Head of caudate nucleus (tissue), 42 donors: ENCODE measurements at regions of chr3 and their contacts with region 1.

Region 1: DNA sequence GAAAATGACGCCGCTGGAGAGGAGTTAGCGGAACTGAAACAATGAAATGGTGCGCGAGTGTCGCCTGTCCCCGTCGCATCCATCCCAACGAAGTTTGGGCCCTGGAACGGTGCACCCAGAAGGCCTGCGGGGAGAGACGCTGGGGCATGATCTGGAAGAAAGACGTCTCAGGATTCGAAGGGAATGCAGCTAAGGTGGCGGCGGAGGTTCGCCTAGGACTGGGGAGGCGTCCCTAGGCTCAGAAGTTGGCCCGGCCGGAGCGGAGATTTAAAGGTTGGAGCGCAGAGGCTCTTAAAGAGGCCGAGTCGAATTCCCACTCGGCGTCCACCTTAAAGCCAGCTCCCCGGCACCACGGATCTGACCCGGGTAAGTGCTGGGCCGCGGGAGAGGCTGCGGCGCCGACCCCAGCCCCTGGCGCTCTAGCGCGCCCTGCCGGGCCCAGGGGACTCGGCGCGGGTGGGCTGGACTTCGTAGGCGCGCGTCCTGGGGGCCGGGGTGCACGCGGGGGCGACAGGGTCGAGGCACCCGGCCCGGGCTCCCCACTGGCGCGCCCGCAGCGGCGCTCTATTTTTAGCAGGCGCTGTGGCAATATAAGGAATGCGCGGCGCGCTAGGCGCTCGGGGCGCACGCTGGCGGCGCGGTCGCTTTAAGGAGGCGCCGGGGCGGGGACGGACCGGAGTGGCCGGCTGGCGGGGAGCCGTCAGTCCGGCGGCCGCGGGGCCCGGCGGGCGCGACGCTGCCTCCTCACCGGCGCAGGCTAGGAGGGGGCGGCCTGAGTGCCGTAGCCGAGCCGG is at the start of gene MRAS:
- DNase-seq: peak in 41 of 42 donors; percentile 54 to 87 (median 76)

Region 2: GRCh38 chr3:138082085-138082991 is 265.8 kb before region 1 on chr3:
- intact Hi-C with region 1: no loop called
- DNase-seq: no peak

Region 3: GRCh38 chr3:138408751-138409161 is 60.6 kb after region 1 on chr3:
- intact Hi-C with region 1: loop called (anchors 10 kb)
- DNase-seq: peak in 18 of 42 donors; percentile 5 to 65 (median 36)

Region 4: GRCh38 chr3:139151530-139151929 is 803.4 kb after region 1 on chr3:
- intact Hi-C with region 1: no loop called
- DNase-seq: no peak